T-cell (primary cell): ENCODE measurements at regions of chr18 and their contacts with region 1.

Region 1: DNA sequence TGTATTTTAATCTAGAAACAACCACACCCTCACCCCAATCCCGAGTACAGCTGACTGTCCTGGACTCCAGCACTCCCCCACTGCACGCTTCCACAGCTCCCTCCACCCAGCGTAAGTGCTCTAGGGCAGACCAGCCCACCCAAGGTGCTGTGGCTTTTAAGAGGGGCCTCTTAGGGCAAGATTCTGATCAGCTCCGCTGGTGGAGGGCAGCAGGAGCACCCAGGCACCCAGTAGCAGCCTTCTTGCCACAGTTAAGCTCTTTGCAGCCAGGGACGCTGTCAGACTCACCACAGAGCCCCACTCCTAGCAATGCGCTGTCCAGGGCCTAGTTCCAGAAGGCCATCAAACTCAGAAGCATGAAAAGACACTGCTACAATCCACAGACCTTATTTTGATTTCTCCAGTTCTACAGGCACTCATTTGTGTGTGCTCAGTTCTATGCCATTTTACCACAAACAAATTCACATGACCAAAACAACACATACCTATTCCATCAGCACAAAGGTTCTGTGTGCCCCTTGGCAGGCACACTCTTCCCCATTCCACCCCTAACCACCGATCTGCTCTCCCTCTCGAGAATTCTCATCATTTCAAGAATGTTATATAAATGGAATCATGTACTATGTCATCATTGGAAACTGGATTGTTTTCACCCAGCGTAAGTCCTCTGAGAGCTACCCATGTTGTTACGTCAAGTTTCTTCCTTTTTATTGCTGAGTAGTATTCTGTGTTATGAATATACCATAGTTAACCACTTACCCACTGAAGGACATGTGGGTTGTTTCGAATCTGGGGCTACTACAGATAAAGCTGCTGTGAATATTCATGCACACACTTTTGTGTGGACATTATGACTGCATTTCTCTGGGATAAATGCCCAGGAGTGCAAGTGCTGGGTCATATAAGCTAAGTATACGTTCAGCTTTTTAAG is 40.4 kb downstream of the PTPN2 start:
- DNase-seq: no peak
- ATAC-seq: no peak
- H3K4me3 ChIP-seq: no peak overlapping the region
- H3K4me3 Mint-ChIP-seq: peak overlapping the region in 1 of 3 donors; percentile 18
- H3K27ac ChIP-seq: peak overlapping the region; percentile 9
- H3K27ac Mint-ChIP-seq: peak overlapping the region; percentile 53 to 62
- H3K4me1 ChIP-seq: peaks cover 19 to 29% of the 10 kb centered on the region in 2 experiments
- H3K4me1 Mint-ChIP-seq: peaks cover 76 to 87% (median 77%) of the 10 kb centered on the region in 3 donors
- H3K27me3 ChIP-seq: no peaks in the 10 kb centered on the region
- H3K27me3 Mint-ChIP-seq: no peaks in the 10 kb centered on the region

Region 2: DNA sequence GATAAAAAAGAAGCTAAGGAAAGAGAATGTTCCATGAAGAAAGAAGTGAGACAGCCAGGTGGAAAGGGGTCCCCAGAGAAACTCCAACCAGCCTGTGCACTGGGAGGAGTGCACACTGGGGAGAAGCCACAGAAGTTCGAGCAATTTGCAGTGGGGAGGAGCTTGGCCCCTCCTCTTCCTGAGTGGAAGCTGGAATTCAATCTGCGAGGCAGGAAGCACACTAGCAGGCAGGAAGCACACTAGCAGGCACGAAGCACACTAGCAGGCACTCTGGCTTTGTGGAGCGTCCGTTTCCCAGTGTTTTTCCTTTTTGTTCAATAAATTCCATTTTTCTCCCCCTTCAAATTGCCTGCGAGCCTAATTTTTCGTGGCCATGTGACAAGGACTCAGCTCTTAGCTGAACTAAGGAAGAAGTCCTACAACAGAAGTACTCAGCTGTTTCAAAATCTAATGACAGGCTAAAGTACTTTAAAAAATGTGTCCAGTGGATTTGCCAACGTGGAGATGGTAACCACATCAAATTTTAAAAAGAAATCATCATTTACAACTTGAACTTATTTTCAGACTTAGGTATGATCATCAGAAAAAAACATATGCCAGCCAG is 164.4 kb before region 1 on chr18:
- CTCF ChIA-PET with region 1: no interaction called
- POLR2A ChIA-PET with region 1: interaction called in 1 of 2 experiments, 18 read pairs
- DNase-seq: no peak
- ATAC-seq: no peak
- H3K4me3 ChIP-seq: no peak overlapping the region
- H3K4me3 Mint-ChIP-seq: no peak overlapping the region
- H3K27ac ChIP-seq: no peak overlapping the region
- H3K27ac Mint-ChIP-seq: peak overlapping the region; percentile 74 to 76
- H3K4me1 ChIP-seq: peaks cover 0 to 4% of the 10 kb centered on the region in 2 experiments
- H3K4me1 Mint-ChIP-seq: peaks cover 9 to 10% (median 10%) of the 10 kb centered on the region in 3 donors
- H3K27me3 ChIP-seq: no peaks in the 10 kb centered on the region
- H3K27me3 Mint-ChIP-seq: no peaks in the 10 kb centered on the region

Region 3: DNA sequence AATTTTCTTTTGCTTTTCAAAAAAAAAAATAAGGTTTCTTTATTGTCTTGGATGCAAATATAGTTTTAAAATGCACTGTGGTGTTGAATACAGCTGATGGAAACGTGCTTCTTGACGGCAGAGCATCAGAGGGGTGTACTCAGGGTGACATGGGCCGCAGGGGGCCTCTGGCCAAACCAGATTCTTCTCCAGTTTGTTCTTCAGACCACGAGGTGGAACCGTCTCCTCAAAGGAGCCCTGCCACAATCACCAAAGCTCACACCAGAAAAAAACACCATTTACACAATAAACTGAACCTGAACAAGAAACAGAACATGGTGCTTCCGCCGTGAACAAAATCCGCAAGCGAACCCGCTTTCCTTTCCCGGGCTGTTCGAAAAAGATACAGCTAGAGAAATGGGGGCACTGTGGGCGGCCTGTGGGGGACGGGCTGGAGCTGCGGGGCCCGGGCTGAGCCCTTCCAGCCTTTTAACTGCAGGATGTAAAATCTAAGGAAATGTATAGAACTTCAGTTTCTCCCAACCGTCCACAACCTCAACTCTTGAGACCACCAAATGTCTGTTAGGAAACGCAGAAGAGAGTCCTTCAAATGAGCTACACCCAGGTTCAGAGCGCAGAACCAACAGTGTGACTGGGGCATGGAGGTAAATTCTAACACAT is 106.3 kb before region 1 on chr18:
- CTCF ChIA-PET with region 1: no interaction called
- POLR2A ChIA-PET with region 1: interaction called in 1 of 2 experiments, 10 read pairs
- DNase-seq: no peak
- ATAC-seq: no peak
- H3K4me3 ChIP-seq: no peak overlapping the region
- H3K4me3 Mint-ChIP-seq: no peak overlapping the region
- H3K27ac ChIP-seq: no peak overlapping the region
- H3K27ac Mint-ChIP-seq: no peak overlapping the region
- H3K4me1 ChIP-seq: no peaks in the 10 kb centered on the region
- H3K4me1 Mint-ChIP-seq: no peaks in the 10 kb centered on the region
- H3K27me3 ChIP-seq: no peaks in the 10 kb centered on the region
- H3K27me3 Mint-ChIP-seq: no peaks in the 10 kb centered on the region

Region 4: GRCh38 chr18:12777500-12777944 is 66.2 kb before region 1 on chr18:
- CTCF ChIA-PET with region 1: no interaction called
- POLR2A ChIA-PET with region 1: no interaction called
- DNase-seq: no peak
- ATAC-seq: peak in 1 of 4 experiments; percentile 45
- H3K4me3 ChIP-seq: peak overlapping the region in 1 of 2 donors; percentile 19
- H3K4me3 Mint-ChIP-seq: peak overlapping the region in 2 of 3 donors; percentile 50 to 60
- H3K27ac ChIP-seq: no peak overlapping the region
- H3K27ac Mint-ChIP-seq: no peak overlapping the region
- H3K4me1 ChIP-seq: peaks cover 0 to 6% of the 10 kb centered on the region in 2 experiments
- H3K4me1 Mint-ChIP-seq: peaks cover 0 to 20% (median 11%) of the 10 kb centered on the region in 3 donors
- H3K27me3 ChIP-seq: no peaks in the 10 kb centered on the region
- H3K27me3 Mint-ChIP-seq: no peaks in the 10 kb centered on the region